ENCODE measurements at regions of chr21 and their contacts with region 1.

Region 1: DNA sequence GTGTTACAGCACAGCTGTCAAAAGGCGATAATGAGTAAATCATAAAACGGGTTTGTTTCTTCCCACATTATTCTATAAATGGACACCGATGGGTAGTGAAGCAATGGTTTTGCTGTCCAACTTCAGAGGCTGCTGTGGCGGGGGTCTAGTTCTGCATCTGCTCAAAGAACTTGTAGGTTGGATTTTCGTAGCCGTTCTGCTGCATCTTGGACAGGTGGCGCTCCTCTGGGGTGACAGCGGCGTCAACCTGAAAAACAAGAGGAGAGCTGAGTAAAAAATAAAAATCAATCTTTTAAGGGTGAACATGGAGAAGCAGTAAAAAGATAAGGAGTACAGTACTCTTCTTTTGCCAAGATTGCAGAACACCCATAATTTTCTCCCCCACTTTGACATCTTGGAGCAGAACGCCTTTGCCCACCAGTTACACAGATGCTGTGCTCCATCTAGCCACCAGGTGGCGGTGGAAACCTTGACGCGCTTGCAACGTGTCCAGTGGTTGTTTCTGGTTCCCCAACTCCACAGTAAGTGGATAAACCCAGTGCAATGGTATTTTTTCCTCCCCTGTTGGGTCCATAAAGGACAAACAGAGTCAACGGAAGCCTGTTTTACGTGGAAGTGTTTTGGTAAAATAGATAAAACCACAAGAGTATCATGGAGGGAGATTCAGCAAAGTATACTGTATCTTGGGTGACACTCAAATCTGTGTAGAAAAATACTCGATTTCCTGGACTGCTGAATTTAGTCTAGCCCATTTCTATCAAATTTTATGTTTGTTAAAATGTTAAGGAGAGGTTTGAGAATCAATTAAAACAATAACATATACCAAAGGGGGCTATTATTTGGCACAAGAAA is 147.0 kb downstream of the GABPA start:
- DNase-seq: peak; percentile 75
- ATAC-seq: peak; percentile 83
- H3K4me3 Mint-ChIP-seq: no peak overlapping the region
- H3K27ac Mint-ChIP-seq: no peak overlapping the region
- H3K4me1 Mint-ChIP-seq: no peaks in the 10 kb centered on the region
- H3K27me3 Mint-ChIP-seq: no peaks in the 10 kb centered on the region
- CTCF ChIP-seq: peak; percentile 89

Region 2: DNA sequence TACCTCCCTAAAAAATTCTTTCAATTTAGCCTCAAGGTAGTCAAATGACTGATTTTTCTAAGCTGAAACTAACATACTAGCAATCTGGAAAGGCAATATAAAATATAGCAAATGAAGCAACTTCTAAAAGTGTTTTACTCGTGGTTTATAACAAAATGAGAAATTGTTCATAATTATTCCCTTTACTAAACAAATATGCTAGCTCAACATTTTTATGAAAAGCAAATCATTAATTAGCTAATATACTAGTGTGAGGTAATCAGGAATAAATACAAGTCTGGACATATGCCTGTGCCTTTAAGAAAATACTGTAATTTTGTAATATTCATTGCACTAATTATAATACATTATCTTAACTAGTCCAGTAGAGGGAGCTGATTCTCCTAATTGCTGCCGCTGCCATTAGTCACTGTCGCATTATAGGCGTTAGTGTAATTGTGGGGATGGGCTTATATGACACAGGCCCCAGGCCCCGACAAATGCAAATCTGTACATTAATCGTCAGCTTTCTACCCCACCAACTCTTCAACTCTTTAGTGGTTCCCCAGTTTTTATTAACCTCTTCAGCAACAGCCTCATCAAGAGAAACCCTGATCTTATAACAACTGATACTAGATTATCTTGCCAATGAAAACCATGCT is 13.9 kb after region 1 on chr21:
- CTCF ChIA-PET with region 1: interaction called, 15 read pairs
- POLR2A ChIA-PET with region 1: no interaction called
- intact Hi-C with region 1: no loop called
- DNase-seq: peak; percentile 17
- ATAC-seq: peak; percentile 79
- H3K4me3 Mint-ChIP-seq: no peak overlapping the region
- H3K27ac Mint-ChIP-seq: no peak overlapping the region
- H3K4me1 Mint-ChIP-seq: no peaks in the 10 kb centered on the region
- H3K27me3 Mint-ChIP-seq: no peaks in the 10 kb centered on the region
- CTCF ChIP-seq: peak; percentile 63

Region 3: GRCh38 chr21:26715878-26716506 is 834.2 kb after region 1 on chr21:
- CTCF ChIA-PET with region 1: interaction called, 5 read pairs
- POLR2A ChIA-PET with region 1: no interaction called
- intact Hi-C with region 1: loop called (anchors 10 kb)
- DNase-seq: peak; percentile 24
- ATAC-seq: no peak
- H3K4me3 Mint-ChIP-seq: no peak overlapping the region
- H3K27ac Mint-ChIP-seq: no peak overlapping the region
- H3K4me1 Mint-ChIP-seq: no peaks in the 10 kb centered on the region
- H3K27me3 Mint-ChIP-seq: peaks cover 5% of the 10 kb centered on the region
- CTCF ChIP-seq: peak; percentile 74